ENCODE measurements at regions of chr9 and their contacts with region 1.

Region 1: DNA sequence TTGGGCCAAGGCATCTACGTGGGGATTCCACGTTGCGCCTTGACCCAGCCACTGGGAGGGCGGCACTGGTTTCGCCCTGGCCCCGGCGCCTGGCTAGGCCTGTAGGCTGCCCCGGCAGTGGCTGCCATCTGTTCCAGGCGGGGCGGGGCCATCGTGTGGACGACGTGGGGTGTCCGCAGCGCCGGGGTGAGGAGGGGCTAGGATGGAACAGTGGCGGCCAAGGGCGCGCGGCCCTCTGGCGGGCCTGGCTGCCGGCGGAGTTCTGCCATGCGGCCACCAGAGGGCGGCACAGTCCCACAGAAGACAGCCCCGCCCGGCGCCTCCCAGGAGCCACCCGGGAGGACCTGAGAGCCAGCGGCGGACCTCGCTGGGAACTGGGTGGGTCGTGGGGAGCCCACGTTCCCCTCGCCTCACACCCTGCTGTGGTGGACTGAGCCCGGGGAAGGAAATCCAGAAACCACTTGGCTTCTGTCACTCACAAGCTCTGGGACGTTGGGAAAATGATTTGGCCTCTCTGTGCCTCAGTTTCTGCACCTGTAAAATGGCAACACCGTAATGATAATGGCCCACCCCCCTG is 22.6 kb upstream of the RAPGEF1 start:
- DNase-seq: no peak
- H3K4me3 ChIP-seq: no peak overlapping the region
- H3K27me3 ChIP-seq: peaks cover 14% of the 10 kb centered on the region
- CTCF ChIP-seq: peak; percentile 76

Region 2: DNA sequence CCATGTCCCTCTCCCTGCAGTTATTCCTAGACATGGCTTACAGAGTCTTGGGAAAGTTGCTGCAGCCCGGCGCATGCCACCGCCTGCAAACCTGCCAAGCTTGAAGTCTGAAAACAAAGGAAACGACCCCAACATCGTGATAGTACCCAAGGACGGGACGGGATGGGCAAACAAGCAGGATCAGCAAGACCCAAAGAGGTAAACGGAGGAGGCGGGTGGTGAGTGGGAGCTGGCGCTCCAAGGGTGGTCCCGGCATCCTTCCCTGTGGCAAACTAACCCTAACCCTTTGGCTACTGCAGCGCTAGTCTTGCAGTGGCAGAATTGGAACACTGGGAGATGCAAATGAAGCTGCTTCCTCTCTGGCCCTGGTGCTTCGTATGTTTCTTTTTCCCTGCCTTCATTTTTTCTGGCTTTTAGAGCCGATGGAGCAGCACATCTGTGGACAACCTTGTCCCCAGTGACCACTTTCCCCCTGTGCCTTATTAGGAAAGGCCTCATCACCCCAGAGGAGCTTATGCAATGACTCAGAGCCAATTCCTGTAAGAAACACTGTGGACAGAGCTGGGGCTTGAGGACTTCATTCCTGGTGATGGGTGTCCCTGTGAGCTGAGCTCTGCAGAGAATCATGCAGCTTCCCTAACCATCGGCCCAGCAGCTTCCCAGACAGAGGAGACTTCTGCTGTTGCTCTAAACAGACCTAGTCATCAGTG is 329.7 kb before region 1 on chr9:
- CTCF ChIA-PET with region 1: no interaction called
- POLR2A ChIA-PET with region 1: no interaction called
- DNase-seq: peak; percentile 79
- H3K4me3 ChIP-seq: no peak overlapping the region
- H3K27me3 ChIP-seq: no peaks in the 10 kb centered on the region
- CTCF ChIP-seq: 0 out of 2 replicates have a peak, but pooled peaks have one; percentile 9

Region 3: DNA sequence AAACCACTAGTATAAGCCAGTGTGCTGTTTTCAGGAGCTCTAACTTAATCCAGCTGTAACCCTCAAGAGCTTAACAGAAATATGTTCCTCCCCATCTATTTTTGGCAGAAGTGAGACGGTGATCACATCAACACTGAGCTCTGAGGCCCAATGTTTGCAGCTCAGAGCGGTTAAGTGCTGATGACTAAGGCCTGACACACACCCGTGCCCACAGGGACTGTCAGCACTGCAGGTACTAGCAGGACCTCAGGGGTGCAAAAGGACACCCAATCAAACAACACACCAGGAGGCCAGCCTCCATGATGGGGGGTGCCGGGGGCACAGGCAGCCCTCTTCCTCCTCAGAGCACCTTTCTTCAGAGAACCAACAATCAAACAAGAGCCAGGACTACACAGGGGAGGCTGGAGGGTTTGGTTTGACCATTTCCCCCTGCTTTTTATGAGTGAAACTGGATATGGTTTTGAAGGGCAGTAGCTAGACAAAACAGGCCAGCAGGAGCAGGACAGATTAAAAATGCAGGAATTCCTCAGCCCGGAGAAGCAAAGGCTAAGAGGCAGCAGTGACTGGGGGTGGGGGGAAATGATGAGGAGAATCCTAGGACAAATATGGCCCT is 83.8 kb before region 1 on chr9:
- CTCF ChIA-PET with region 1: no interaction called
- POLR2A ChIA-PET with region 1: no interaction called
- DNase-seq: peak; percentile 92
- H3K4me3 ChIP-seq: no peak overlapping the region
- H3K27me3 ChIP-seq: no peaks in the 10 kb centered on the region
- CTCF ChIP-seq: peak; percentile 7; the same call in 1 of the 2 replicates

Region 4: DNA sequence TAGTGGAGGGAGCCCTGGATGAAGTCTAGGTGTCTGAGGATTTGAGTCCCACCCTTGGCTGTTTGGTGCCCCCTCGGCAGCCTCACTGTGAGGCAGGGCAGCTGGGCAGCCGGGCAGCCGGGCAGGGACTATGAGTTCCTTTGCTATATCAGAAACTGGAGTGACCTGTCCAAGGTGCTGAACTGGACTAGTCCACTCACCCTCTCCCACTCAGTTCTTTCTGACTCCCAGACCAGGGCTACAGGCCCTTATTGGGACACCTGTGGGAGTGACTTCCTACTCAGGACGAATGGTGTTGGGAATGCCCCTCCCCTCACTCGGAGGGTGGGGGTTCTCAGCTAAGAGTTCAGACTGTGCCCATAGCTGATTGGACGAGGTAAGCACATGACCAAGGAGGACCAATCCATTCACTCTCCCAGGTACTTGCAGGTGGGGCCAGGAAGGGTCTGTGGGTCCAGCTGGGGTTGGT is 11.5 kb after region 1 on chr9:
- CTCF ChIA-PET with region 1: interaction called, 10 read pairs
- POLR2A ChIA-PET with region 1: no interaction called
- DNase-seq: no peak
- H3K4me3 ChIP-seq: no peak overlapping the region
- H3K27me3 ChIP-seq: peaks cover 5% of the 10 kb centered on the region; the same call in 1 of the 2 replicates
- CTCF ChIP-seq: no peak

Region 5: GRCh38 chr9:131960871-131961495 is 198.5 kb after region 1 on chr9:
- CTCF ChIA-PET with region 1: no interaction called
- POLR2A ChIA-PET with region 1: no interaction called
- DNase-seq: no peak
- H3K4me3 ChIP-seq: no peak overlapping the region
- H3K27me3 ChIP-seq: no peaks in the 10 kb centered on the region
- CTCF ChIP-seq: no peak

Region 6: DNA sequence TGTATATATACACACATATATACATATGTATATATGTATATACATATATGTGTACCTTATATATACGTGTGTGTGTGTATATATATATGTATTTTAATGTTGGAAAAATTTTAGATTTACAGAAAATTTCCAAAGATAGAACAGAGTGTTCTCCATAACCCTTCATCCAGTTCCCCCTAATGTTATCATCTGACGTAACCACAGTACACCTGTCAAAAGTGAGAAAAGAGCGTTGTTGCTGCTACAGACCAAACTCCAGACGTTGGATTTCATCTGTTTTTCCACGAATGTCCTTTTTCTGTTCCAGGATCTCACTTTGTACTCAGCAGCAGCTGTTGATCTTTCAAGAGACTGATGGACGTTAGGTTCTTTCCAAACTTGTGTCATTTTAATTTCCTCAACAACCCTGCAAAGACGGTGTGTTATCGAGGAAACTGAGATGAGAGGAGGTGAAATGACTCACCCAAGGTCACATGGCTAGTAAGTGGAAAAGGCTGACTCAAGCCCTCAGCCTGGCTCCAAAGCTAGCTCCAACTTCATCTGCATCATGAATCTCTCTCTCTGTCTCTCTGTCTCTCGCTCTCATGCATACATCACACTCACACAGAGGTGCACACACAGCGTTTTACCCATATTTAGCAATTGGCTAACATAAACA is 382.4 kb after region 1 on chr9:
- CTCF ChIA-PET with region 1: no interaction called
- POLR2A ChIA-PET with region 1: no interaction called
- DNase-seq: no peak
- H3K4me3 ChIP-seq: no peak overlapping the region
- H3K27me3 ChIP-seq: peaks cover 31% of the 10 kb centered on the region
- CTCF ChIP-seq: no peak

Region 7: DNA sequence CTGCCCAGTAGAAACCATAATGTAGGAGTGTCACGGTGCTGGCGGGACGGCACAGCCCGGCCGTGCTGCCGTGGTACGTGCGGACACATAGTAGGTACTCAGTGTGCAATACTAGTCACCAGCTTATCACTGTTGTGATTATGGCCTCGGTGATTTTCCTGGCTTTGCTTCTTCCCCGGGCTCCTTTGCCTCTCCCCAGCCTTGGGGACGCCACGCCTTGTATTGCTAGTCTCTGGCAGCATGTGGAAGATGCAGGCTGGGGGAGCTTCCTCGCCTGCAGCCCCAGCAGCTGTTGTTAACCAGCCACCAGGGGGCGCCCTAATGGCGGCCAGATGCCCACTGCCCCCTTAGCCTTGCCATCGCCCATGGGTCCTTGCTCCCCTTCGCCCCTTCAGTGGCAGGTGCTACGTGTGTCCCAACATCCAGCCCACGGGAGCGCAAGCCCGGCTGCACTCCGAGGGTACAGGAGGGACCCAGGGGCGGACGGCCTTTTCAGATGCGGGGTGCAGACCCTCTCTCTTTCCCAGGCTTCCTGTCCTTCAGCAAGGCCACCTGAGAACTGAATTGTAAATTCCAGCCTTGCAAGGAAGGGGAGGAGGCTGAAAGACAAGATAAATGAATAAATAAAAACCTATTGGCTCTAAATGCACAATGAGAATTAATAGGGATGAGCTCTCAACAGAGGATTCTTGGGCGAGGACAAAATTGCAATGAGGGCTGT is 407.4 kb after region 1 on chr9:
- CTCF ChIA-PET with region 1: interaction called, 21 read pairs
- POLR2A ChIA-PET with region 1: no interaction called
- DNase-seq: no peak
- H3K4me3 ChIP-seq: no peak overlapping the region
- H3K27me3 ChIP-seq: peaks cover 23% of the 10 kb centered on the region
- CTCF ChIP-seq: peak; percentile 86

Region 8: DNA sequence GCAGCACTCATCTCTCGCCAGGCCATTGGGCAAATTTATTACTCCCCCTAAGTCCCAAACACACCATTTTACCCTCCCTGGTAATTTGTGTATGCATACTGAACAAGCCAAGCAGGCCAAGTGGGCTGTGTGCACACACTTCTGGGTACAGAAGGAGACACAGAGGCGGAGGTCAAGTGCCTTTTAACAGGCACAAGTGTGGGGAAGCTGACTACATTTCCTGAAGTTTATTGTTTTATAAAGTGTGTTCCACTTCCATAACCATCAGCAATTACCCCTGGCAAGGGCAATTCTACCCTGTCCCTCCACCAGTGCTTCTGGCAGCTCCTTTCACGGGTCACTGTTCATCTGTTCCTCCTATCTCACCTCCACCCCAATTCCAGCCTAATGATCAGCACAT is 498.4 kb after region 1 on chr9:
- CTCF ChIA-PET with region 1: interaction called, 194 read pairs
- POLR2A ChIA-PET with region 1: no interaction called
- DNase-seq: no peak
- H3K4me3 ChIP-seq: no peak overlapping the region
- H3K27me3 ChIP-seq: no peaks in the 10 kb centered on the region
- CTCF ChIP-seq: no peak

Region 9: GRCh38 chr9:132268725-132269352 is 506.4 kb after region 1 on chr9:
- CTCF ChIA-PET with region 1: interaction called, 26 read pairs
- POLR2A ChIA-PET with region 1: no interaction called
- DNase-seq: no peak
- H3K4me3 ChIP-seq: no peak overlapping the region
- H3K27me3 ChIP-seq: no peaks in the 10 kb centered on the region
- CTCF ChIP-seq: peak; percentile 93